ENCODE measurements at regions of chr18 and their contacts with region 1.

Region 1: GRCh38 chr18:9614401-9615279 is at the start of gene PPP4R1:
- DNase-seq: peak; percentile 90
- H3K4me3 Mint-ChIP-seq: peak within 1 kb of the TSS; percentile 94
- H3K27ac Mint-ChIP-seq: peak within 1 kb of the TSS; percentile 89
- H3K4me1 Mint-ChIP-seq: peaks cover 38% of the 10 kb centered on the region
- H3K27me3 Mint-ChIP-seq: peaks cover 1% of the 10 kb centered on the region
- total RNA-seq, gene PPP4R1: 52.8 and 56.0 TPM in 2 replicates

Region 2: DNA sequence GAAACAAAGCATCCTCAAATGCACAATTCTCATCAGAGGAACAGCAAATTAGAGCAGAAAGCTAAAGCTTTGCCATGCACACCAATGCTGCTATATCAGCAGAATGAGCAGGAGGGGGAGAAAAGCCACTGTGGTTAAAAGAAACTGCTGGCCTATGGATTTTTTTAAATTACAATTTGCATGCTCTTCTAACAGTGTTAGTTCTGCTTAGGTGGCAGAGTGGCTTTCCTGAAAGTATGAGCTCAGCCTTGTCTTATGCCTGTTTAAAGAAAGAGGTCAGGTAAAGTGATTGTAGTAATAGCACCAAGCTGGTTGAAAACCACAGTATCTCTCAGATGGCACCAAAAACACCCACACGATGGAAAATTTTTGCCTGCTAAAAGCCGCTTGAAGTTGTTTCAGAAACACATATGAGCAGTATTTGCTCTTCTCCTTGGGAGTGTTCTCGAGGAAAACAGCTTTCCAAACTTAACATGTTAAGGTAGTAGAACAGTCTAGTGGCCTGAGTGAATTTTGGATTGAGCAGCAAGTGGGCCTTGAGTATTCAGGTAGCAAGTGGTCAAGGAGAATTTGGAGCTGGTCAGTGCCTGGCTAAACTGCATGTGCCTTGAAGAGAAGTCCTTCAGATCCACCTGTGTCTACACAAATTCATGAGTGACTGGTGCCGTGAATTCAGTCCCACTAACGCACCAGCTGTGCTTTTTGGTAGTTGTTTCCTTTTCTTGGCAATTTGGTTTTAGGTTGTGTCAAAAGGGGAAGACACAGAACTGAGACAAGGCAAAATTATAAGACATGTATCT is 531.7 kb before region 1 on chr18:
- intact Hi-C with region 1: loop called (anchors 10 kb)
- DNase-seq: peak; percentile 86
- H3K4me3 Mint-ChIP-seq: peak overlapping the region; percentile 73
- H3K27ac Mint-ChIP-seq: peak overlapping the region; percentile 97
- H3K4me1 Mint-ChIP-seq: peaks cover 40% of the 10 kb centered on the region
- H3K27me3 Mint-ChIP-seq: no peaks in the 10 kb centered on the region

Region 3: GRCh38 chr18:9334329-9334972 is 280.2 kb before region 1 on chr18 and contains the start of gene TWSG1:
- intact Hi-C with region 1: loop called (anchors 10 kb)
- DNase-seq: peak; percentile 97
- H3K4me3 Mint-ChIP-seq: peak within 1 kb of the TSS; percentile 83
- H3K27ac Mint-ChIP-seq: peak within 1 kb of the TSS; percentile 74
- H3K4me1 Mint-ChIP-seq: peaks cover 25% of the 10 kb centered on the region
- H3K27me3 Mint-ChIP-seq: peaks cover 29% of the 10 kb centered on the region
- total RNA-seq, gene TWSG1: 9.9 and 10.1 TPM in 2 replicates

Region 4: GRCh38 chr18:9549405-9549804 is 65.2 kb before region 1 on chr18:
- intact Hi-C with region 1: no loop called
- DNase-seq: no peak
- H3K4me3 Mint-ChIP-seq: no peak overlapping the region
- H3K27ac Mint-ChIP-seq: no peak overlapping the region
- H3K4me1 Mint-ChIP-seq: no peaks in the 10 kb centered on the region
- H3K27me3 Mint-ChIP-seq: no peaks in the 10 kb centered on the region

Region 5: GRCh38 chr18:9561759-9562158 is 52.9 kb before region 1 on chr18:
- intact Hi-C with region 1: no loop called
- DNase-seq: no peak
- H3K4me3 Mint-ChIP-seq: no peak overlapping the region
- H3K27ac Mint-ChIP-seq: no peak overlapping the region
- H3K4me1 Mint-ChIP-seq: no peaks in the 10 kb centered on the region
- H3K27me3 Mint-ChIP-seq: no peaks in the 10 kb centered on the region

Region 6: GRCh38 chr18:9673296-9674251 is 58.9 kb after region 1 on chr18:
- intact Hi-C with region 1: loop called (anchors 5 kb)
- DNase-seq: peak; percentile 71
- H3K4me3 Mint-ChIP-seq: no peak overlapping the region
- H3K27ac Mint-ChIP-seq: peak overlapping the region; percentile 48
- H3K4me1 Mint-ChIP-seq: peaks cover 5% of the 10 kb centered on the region
- H3K27me3 Mint-ChIP-seq: peaks cover 25% of the 10 kb centered on the region

Region 7: DNA sequence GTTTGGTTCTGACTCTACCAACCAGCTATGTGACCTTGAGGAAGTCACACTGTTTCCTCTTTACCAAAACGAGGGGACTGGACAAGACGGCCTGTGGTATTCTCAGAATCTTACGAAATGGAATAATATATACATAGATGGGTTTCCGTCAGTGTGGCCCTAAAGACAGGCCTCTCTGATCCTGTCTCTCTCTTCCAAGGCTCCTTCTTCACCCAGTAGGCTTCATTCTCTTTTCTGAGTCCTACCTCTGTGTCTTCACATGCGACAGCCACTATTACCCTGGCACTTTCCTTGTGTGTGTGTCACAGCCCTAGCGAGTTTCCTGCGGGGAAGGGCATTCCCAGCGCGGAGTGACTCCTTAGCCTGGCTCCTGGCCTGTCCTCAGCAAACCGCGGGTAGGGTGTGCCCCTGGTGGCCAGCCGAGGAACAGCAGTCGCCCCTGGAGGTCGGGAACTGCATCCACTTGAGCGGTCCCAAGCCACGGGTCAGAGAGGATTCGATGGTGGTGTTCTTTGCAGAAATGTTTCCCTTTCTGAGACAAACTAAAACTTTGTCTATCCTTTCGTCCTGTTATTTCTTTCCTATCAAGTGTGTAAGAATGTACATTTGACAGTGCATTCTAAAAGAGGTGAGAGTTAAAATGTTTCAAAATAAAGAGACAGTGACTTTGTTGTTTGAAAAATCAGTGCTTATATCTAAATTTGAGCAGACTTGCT is 156.8 kb after region 1 on chr18:
- intact Hi-C with region 1: loop called (anchors 5 kb)
- DNase-seq: peak; percentile 86
- H3K4me3 Mint-ChIP-seq: no peak overlapping the region
- H3K27ac Mint-ChIP-seq: no peak overlapping the region
- H3K4me1 Mint-ChIP-seq: peaks cover 4% of the 10 kb centered on the region
- H3K27me3 Mint-ChIP-seq: peaks cover 22% of the 10 kb centered on the region